ENCODE measurements at regions of chr4 and their contacts with region 1.

Region 1: GRCh38 chr4:88533937-88534750 is 10.6 kb upstream of the PYURF start:
- DNase-seq: no peak
- ATAC-seq: no peak
- H3K4me3 ChIP-seq: no peak overlapping the region
- H3K4me3 Mint-ChIP-seq: no peak overlapping the region
- H3K27ac ChIP-seq: no peak overlapping the region
- H3K27ac Mint-ChIP-seq: no peak overlapping the region
- H3K4me1 ChIP-seq: no peaks in the 10 kb centered on the region
- H3K4me1 Mint-ChIP-seq: no peaks in the 10 kb centered on the region
- H3K27me3 ChIP-seq: no peaks in the 10 kb centered on the region
- H3K27me3 Mint-ChIP-seq: no peaks in the 10 kb centered on the region
- CTCF ChIP-seq: no peak

Region 2: DNA sequence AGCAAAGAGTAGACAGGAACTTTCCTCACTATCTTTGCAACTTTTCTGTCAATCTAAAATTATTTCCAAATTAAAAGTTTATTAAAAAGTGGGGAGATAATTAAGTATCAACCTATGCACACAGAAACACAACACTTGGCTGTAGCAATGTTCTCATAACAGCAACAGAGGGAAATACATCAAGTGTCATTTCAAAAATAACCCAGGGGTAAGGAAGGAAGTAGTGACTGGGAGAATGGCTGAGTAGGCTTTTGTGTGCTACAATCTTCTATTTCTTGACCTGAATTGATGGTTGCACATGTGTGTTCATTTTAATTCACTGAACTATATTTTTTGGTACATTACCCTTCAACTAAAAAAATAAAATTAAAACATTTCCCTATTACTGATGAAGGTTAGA is 443.2 kb before region 1 on chr4:
- CTCF ChIA-PET with region 1: no interaction called
- POLR2A ChIA-PET with region 1: no interaction called
- intact Hi-C with region 1: no loop called
- DNase-seq: no peak
- ATAC-seq: no peak
- H3K4me3 ChIP-seq: no peak overlapping the region
- H3K4me3 Mint-ChIP-seq: no peak overlapping the region
- H3K27ac ChIP-seq: no peak overlapping the region
- H3K27ac Mint-ChIP-seq: no peak overlapping the region
- H3K4me1 ChIP-seq: no peaks in the 10 kb centered on the region
- H3K4me1 Mint-ChIP-seq: no peaks in the 10 kb centered on the region
- H3K27me3 ChIP-seq: no peaks in the 10 kb centered on the region
- H3K27me3 Mint-ChIP-seq: peaks cover 2% of the 10 kb centered on the region
- CTCF ChIP-seq: no peak

Region 3: DNA sequence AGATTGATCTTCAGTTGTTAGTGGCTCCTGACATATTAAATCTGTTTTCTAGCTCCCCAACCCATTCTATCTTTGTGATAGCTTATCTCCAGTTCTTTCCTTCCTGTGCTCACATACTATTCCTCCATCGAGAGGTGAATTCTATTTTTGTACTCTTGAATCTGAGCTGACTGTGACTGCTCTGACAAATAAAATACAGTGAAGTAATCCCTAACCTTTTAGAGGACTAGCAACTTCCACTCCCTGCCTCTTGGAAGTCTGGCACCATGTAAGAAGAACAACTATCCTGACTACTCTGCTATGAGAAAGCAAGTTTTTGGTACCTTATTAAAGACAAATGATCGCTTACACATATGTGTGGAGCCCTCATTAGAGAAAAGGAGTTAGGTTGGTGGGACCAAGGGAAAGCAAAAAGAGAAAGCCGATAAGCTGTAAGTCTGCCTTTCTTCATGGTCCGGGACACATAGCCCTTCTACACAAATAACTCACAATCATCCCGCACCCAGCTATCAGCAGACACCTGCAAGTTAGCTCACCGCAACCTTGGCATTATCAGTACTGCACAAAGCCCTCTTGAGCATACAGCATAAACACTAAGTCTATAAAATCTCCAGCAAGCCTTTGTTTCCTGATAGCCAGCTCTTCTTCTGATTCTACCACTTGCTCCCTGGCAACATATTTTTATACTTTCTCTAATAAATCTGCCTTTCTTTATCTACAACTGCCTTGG is 236.3 kb before region 1 on chr4:
- CTCF ChIA-PET with region 1: no interaction called
- POLR2A ChIA-PET with region 1: no interaction called
- intact Hi-C with region 1: no loop called
- DNase-seq: no peak
- ATAC-seq: no peak
- H3K4me3 ChIP-seq: no peak overlapping the region
- H3K4me3 Mint-ChIP-seq: no peak overlapping the region
- H3K27ac ChIP-seq: no peak overlapping the region
- H3K27ac Mint-ChIP-seq: no peak overlapping the region
- H3K4me1 ChIP-seq: no peaks in the 10 kb centered on the region
- H3K4me1 Mint-ChIP-seq: no peaks in the 10 kb centered on the region
- H3K27me3 ChIP-seq: no peaks in the 10 kb centered on the region
- H3K27me3 Mint-ChIP-seq: no peaks in the 10 kb centered on the region
- CTCF ChIP-seq: no peak

Region 4: DNA sequence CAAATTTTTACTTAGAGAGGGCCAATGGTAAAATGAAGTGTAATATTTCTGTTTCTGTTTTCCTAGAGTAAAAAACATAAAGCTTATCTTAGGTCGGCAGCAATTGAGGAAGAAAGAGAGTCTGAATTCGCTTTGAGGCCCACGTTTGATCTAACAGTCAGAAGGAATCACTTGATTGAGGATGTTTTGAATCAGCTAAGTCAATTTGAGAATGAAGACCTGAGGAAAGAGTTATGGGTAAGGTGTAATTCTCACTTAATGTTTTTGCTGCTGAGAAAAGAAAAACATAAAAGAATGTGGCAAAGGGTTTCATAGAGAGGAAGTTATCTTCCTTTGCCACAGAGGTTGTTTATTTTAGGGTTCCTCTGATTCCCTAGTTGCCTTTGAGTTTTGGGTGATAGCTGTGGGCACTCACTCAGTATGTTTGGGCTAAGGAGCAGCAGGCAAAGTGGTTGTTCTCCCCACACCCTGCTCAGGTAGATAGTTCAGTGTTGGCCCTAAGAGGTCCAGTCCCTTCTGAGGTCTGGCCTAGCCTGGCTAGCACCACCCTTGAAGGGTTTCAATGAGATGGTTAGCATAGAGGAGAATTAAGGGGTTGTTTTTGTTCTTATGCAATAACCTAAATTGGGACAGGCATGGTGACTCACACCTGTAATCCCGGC is 44.9 kb before region 1 on chr4:
- CTCF ChIA-PET with region 1: no interaction called
- POLR2A ChIA-PET with region 1: no interaction called
- intact Hi-C with region 1: no loop called
- DNase-seq: peak in 1 of 9 experiments; percentile 3
- ATAC-seq: no peak
- H3K4me3 ChIP-seq: no peak overlapping the region
- H3K4me3 Mint-ChIP-seq: no peak overlapping the region
- H3K27ac ChIP-seq: peak overlapping the region in 1 of 2 experiments; percentile 58
- H3K27ac Mint-ChIP-seq: peak overlapping the region; percentile 79
- H3K4me1 ChIP-seq: peaks cover 11% of the 10 kb centered on the region
- H3K4me1 Mint-ChIP-seq: peaks cover 12% of the 10 kb centered on the region
- H3K27me3 ChIP-seq: no peaks in the 10 kb centered on the region
- H3K27me3 Mint-ChIP-seq: no peaks in the 10 kb centered on the region
- CTCF ChIP-seq: no peak

Region 5: DNA sequence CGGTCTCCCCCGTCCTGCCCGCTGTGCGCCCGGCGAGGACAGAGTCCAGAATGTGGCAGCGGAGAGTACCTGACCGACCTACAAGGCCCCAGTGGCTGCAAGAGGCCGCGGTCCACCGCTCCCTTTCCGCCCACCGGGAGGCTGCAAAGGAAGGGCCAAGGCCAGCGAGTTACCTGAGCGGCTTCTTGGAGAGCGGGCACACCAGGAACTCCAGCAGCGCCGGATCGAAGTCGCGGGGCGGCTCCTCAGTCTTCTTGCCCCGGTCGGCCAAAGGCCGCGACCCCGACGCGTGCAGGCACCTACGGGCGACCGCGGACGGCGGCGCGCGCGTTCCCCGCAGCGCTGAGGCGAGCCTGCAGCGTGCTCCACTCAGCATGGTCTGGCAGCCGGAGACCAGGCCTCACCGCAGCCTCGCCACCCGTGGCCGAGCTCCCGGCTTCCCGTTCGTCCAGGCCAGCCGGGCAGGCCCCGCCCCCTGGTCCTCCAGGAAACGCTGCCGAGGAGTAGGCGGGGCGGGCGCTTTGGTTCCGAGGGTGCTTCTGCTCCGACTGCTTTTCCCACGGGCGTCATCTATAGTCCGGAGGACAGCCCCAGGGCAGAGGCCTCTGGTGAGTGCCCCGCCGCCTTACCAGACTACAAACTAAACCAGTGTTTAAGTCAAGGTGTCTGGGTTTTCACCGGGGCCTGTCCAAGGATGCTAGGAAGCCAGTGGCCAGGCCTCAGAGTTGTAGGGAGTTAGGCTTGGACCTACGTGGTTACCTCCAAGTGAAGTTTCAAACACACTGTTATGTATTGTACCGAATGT is 10.6 kb before region 1 on chr4 and contains the start of gene PYURF:
- CTCF ChIA-PET with region 1: interaction called, 64 read pairs
- POLR2A ChIA-PET with region 1: interaction called, 5 read pairs
- intact Hi-C with region 1: no loop called
- DNase-seq: peak; percentile 31 to 87 (median 75)
- ATAC-seq: peak; percentile 76
- H3K4me3 ChIP-seq: peak within 1 kb of the TSS; percentile 78 to 90
- H3K4me3 Mint-ChIP-seq: peak within 1 kb of the TSS; percentile 93
- H3K27ac ChIP-seq: peak within 1 kb of the TSS; percentile 54 to 76
- H3K27ac Mint-ChIP-seq: peak within 1 kb of the TSS; percentile 94
- H3K4me1 ChIP-seq: peaks cover 16% of the 10 kb centered on the region
- H3K4me1 Mint-ChIP-seq: peaks cover 43% of the 10 kb centered on the region
- H3K27me3 ChIP-seq: no peaks in the 10 kb centered on the region
- H3K27me3 Mint-ChIP-seq: no peaks in the 10 kb centered on the region
- CTCF ChIP-seq: no peak
- total RNA-seq, gene PYURF: 25.5 to 27.6 TPM

Region 6: GRCh38 chr4:88613417-88613875 is 79.3 kb after region 1 on chr4:
- CTCF ChIA-PET with region 1: interaction called, 11 read pairs
- POLR2A ChIA-PET with region 1: interaction called, 4 read pairs
- intact Hi-C with region 1: no loop called
- DNase-seq: peak in 8 of 9 experiments; percentile 18 to 88 (median 49)
- ATAC-seq: peak; percentile 92
- H3K4me3 ChIP-seq: peak overlapping the region; percentile 16 to 19
- H3K4me3 Mint-ChIP-seq: peak overlapping the region; percentile 78
- H3K27ac ChIP-seq: peak overlapping the region; percentile 64 to 81
- H3K27ac Mint-ChIP-seq: peak overlapping the region; percentile 96
- H3K4me1 ChIP-seq: peaks cover 52% of the 10 kb centered on the region
- H3K4me1 Mint-ChIP-seq: peaks cover 87% of the 10 kb centered on the region
- H3K27me3 ChIP-seq: no peaks in the 10 kb centered on the region
- H3K27me3 Mint-ChIP-seq: no peaks in the 10 kb centered on the region
- CTCF ChIP-seq: no peak

Region 7: DNA sequence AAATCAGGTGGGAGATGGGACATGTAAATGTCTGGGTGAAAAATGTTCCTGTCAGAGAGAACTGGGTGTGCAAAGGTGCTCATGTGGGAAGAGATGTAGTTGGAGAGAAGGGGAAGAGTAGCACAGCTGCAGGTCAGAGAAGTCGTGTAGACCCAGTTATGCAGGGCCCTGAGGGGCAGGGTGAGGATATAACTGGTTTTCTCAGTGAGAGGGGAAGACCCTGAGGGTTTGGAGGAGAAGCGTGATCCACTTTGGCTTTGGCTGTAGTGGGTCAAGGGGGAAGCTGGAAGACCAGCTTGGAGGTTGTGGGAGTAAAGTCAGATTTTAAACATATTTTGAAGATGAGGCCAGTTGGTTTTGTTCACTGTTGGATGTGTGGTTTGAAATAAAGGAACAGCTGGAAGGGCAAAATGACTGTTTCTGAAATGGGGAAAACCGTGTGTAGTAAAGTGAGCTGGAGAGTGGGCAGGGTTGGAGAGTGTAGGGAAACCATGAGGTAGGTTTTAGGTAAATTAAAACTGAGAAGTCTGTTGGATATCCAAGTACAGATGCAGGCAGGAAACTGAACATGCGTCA is 119.3 kb after region 1 on chr4:
- CTCF ChIA-PET with region 1: interaction called, 28 read pairs
- POLR2A ChIA-PET with region 1: no interaction called
- intact Hi-C with region 1: no loop called
- DNase-seq: no peak
- ATAC-seq: no peak
- H3K4me3 ChIP-seq: no peak overlapping the region
- H3K4me3 Mint-ChIP-seq: no peak overlapping the region
- H3K27ac ChIP-seq: no peak overlapping the region
- H3K27ac Mint-ChIP-seq: peak overlapping the region; percentile 56
- H3K4me1 ChIP-seq: no peaks in the 10 kb centered on the region
- H3K4me1 Mint-ChIP-seq: peaks cover 30% of the 10 kb centered on the region
- H3K27me3 ChIP-seq: no peaks in the 10 kb centered on the region
- H3K27me3 Mint-ChIP-seq: no peaks in the 10 kb centered on the region
- CTCF ChIP-seq: no peak

Region 8: DNA sequence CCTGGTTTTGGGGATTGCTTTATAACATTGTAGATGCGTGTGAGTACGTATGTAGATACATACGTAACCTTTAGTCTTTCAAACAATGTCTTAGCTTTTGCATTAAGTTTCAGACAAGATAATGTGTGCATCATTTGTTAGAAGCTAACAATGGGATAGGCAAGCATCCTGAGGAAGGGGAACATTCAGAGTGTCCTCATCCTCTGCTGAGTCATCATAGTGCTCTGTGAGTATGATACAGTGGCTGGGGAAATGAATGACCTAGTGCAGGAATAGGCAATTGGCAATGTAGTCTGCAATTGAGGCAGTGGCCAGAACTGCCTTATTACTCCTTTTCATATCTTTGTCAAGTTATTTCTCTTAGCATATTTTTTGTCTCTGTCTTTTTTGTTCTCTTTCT is 156.2 kb after region 1 on chr4:
- CTCF ChIA-PET with region 1: interaction called, 12 read pairs
- POLR2A ChIA-PET with region 1: no interaction called
- intact Hi-C with region 1: no loop called
- DNase-seq: no peak
- ATAC-seq: no peak
- H3K4me3 ChIP-seq: no peak overlapping the region
- H3K4me3 Mint-ChIP-seq: no peak overlapping the region
- H3K27ac ChIP-seq: no peak overlapping the region
- H3K27ac Mint-ChIP-seq: no peak overlapping the region
- H3K4me1 ChIP-seq: no peaks in the 10 kb centered on the region
- H3K4me1 Mint-ChIP-seq: peaks cover 3% of the 10 kb centered on the region
- H3K27me3 ChIP-seq: no peaks in the 10 kb centered on the region
- H3K27me3 Mint-ChIP-seq: no peaks in the 10 kb centered on the region
- CTCF ChIP-seq: no peak

Region 9: DNA sequence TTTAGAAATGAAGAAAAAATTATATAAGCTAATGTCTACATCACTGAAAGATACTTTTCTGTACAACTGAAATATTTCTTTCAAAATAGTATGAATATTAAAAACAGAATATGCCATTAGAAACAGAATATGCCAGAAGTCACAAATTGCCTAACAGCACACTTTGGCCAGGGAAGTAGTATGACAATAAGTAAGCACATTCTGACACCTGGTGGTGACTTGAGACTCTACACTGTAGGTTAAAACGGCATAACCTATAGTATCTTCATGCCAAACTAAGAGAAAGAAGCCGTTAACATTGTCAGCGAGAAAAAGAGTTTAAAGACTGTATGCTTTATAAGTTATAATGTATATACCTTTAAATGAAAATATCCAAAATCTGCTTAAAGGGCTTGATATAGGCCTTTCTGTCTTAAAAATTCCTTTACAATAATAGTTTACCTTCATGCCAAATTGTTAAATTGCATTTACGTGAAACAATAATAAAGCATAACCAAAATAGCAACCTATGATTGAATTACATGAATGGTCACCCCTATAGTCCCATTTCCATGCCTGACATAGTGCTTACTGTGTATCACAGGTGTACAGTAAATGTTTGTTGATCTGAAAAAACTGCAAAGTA is 490.0 kb after region 1 on chr4:
- CTCF ChIA-PET with region 1: interaction called, 35 read pairs
- POLR2A ChIA-PET with region 1: no interaction called
- intact Hi-C with region 1: loop called (anchors 1 to 5 kb)
- DNase-seq: peak; percentile 5 to 82 (median 46)
- ATAC-seq: peak; percentile 100
- H3K4me3 ChIP-seq: no peak overlapping the region
- H3K4me3 Mint-ChIP-seq: no peak overlapping the region
- H3K27ac ChIP-seq: no peak overlapping the region
- H3K27ac Mint-ChIP-seq: no peak overlapping the region
- H3K4me1 ChIP-seq: no peaks in the 10 kb centered on the region
- H3K4me1 Mint-ChIP-seq: no peaks in the 10 kb centered on the region
- H3K27me3 ChIP-seq: no peaks in the 10 kb centered on the region
- H3K27me3 Mint-ChIP-seq: peaks cover 10% of the 10 kb centered on the region
- CTCF ChIP-seq: peak; percentile 87